ENCODE measurements at regions of chr13 and their contacts with region 1.

Region 1: GRCh38 chr13:85799097-85799582 is at the start of gene SLITRK6:
- DNase-seq: peak; percentile 94
- H3K4me3 ChIP-seq: peak within 1 kb of the TSS; percentile 47 to 78 (median 63)
- H3K27ac ChIP-seq: peak within 1 kb of the TSS; percentile 38
- H3K4me1 ChIP-seq: peaks cover 5% of the 10 kb centered on the region
- H3K27me3 ChIP-seq: no peaks in the 10 kb centered on the region
- CTCF ChIP-seq: peak in 1 of 2 donors; percentile 53
- total RNA-seq, gene SLITRK6: 7.2 to 20.3 TPM

Region 2: DNA sequence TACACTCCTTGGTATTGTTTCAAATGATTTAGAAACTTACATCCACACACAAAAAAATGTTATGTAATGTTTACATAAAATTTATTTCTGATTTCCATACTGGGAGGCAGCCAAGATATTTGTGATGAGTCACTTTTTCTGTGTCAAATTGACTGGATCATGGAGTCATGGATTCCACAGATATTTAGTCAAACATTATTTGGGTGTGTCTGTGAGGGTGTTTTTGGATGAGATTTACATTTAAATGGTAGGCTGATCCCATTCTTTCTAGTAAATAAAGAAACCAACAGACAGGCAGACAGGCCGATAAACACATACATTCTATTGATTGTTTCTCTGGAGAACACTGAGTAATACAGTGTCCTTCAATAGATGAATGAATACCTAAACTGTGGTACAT is 562.7 kb before region 1 on chr13:
- CTCF ChIA-PET with region 1: no interaction called
- dilution Hi-C with region 1: no loop called
- in situ Hi-C with region 1: loop called in 1 of 2 experiments (anchors 25 kb)
- intact Hi-C with region 1: no loop called
- DNase-seq: peak; percentile 77
- H3K4me3 ChIP-seq: peak overlapping the region in 1 of 3 experiments; percentile 5
- H3K27ac ChIP-seq: peak overlapping the region; percentile 44
- H3K4me1 ChIP-seq: peaks cover 21% of the 10 kb centered on the region
- H3K27me3 ChIP-seq: no peaks in the 10 kb centered on the region
- CTCF ChIP-seq: no peak

Region 3: GRCh38 chr13:85367887-85368286 is 431.3 kb before region 1 on chr13:
- CTCF ChIA-PET with region 1: no interaction called
- dilution Hi-C with region 1: no loop called
- in situ Hi-C with region 1: no loop called
- intact Hi-C with region 1: loop called (anchors 5 kb)
- DNase-seq: no peak
- H3K4me3 ChIP-seq: no peak overlapping the region
- H3K27ac ChIP-seq: no peak overlapping the region
- H3K4me1 ChIP-seq: no peaks in the 10 kb centered on the region
- H3K27me3 ChIP-seq: no peaks in the 10 kb centered on the region
- CTCF ChIP-seq: no peak

Region 4: GRCh38 chr13:85508683-85509329 is 290.3 kb before region 1 on chr13:
- CTCF ChIA-PET with region 1: interaction called, 3 read pairs
- dilution Hi-C with region 1: no loop called
- in situ Hi-C with region 1: no loop called
- intact Hi-C with region 1: loop called (anchors 1 kb)
- DNase-seq: peak; percentile 60
- H3K4me3 ChIP-seq: no peak overlapping the region
- H3K27ac ChIP-seq: peak overlapping the region; percentile 42
- H3K4me1 ChIP-seq: peaks cover 28% of the 10 kb centered on the region
- H3K27me3 ChIP-seq: no peaks in the 10 kb centered on the region
- CTCF ChIP-seq: peak in 1 of 2 donors; percentile 27

Region 5: DNA sequence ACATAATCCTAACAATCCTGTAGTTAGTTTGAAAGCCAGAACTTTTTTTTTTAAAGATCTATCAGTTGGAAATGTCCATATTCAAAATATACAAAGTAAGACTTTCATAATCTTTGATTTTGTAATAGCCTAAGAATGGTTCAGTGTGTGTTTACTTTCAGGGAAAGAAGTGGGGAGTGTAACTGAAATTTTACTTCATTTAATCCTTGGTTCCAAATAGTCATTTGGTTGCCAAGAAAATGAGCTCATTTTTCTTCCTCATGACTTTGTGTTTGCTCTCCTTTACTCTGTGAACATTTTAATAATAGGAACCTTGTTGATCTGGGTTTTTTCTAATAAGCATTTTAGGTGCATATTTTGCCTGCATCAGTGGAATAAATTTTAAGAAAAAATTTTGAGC is 278.7 kb before region 1 on chr13:
- CTCF ChIA-PET with region 1: interaction called, 11 read pairs
- dilution Hi-C with region 1: no loop called
- in situ Hi-C with region 1: no loop called
- intact Hi-C with region 1: no loop called
- DNase-seq: no peak
- H3K4me3 ChIP-seq: no peak overlapping the region
- H3K27ac ChIP-seq: no peak overlapping the region
- H3K4me1 ChIP-seq: no peaks in the 10 kb centered on the region
- H3K27me3 ChIP-seq: no peaks in the 10 kb centered on the region
- CTCF ChIP-seq: no peak

Region 6: GRCh38 chr13:85586422-85586831 is 212.7 kb before region 1 on chr13:
- CTCF ChIA-PET with region 1: no interaction called
- dilution Hi-C with region 1: no loop called
- in situ Hi-C with region 1: no loop called
- intact Hi-C with region 1: loop called (anchors 1 kb)
- DNase-seq: peak; percentile 99
- H3K4me3 ChIP-seq: no peak overlapping the region
- H3K27ac ChIP-seq: peak overlapping the region; percentile 36
- H3K4me1 ChIP-seq: peaks cover 33% of the 10 kb centered on the region
- H3K27me3 ChIP-seq: no peaks in the 10 kb centered on the region
- CTCF ChIP-seq: no peak

Region 7: GRCh38 chr13:85632526-85633195 is 166.5 kb before region 1 on chr13:
- CTCF ChIA-PET with region 1: no interaction called
- dilution Hi-C with region 1: no loop called
- in situ Hi-C with region 1: no loop called
- intact Hi-C with region 1: no loop called
- DNase-seq: no peak
- H3K4me3 ChIP-seq: no peak overlapping the region
- H3K27ac ChIP-seq: no peak overlapping the region
- H3K4me1 ChIP-seq: no peaks in the 10 kb centered on the region
- H3K27me3 ChIP-seq: no peaks in the 10 kb centered on the region
- CTCF ChIP-seq: no peak

Measured in mammary epithelial cell (primary cell).